ENCODE measurements at regions of chr2 and their contacts with region 1.

Region 1: GRCh38 chr2:60881047-60881932 is at the start of gene REL:
- DNase-seq: peak; percentile 90
- H3K4me3 Mint-ChIP-seq: peak within 1 kb of the TSS; percentile 95
- H3K27ac Mint-ChIP-seq: peak within 1 kb of the TSS; percentile 96
- H3K4me1 Mint-ChIP-seq: peaks cover 27% of the 10 kb centered on the region
- H3K27me3 Mint-ChIP-seq: peaks cover 3% of the 10 kb centered on the region
- total RNA-seq, gene REL: 22.9 to 24.0 TPM

Region 2: GRCh38 chr2:60756191-60757041 is 124.9 kb before region 1 on chr2 and contains the start of gene PAPOLG:
- CTCF ChIA-PET with region 1: no interaction called
- POLR2A ChIA-PET with region 1: interaction called, 17 read pairs
- DNase-seq: peak; percentile 97
- H3K4me3 Mint-ChIP-seq: peak within 1 kb of the TSS; percentile 100
- H3K27ac Mint-ChIP-seq: peak within 1 kb of the TSS; percentile 99
- H3K4me1 Mint-ChIP-seq: peaks cover 30% of the 10 kb centered on the region
- H3K27me3 Mint-ChIP-seq: no peaks in the 10 kb centered on the region
- total RNA-seq, gene PAPOLG: 21.1 to 23.6 TPM

Region 3: DNA sequence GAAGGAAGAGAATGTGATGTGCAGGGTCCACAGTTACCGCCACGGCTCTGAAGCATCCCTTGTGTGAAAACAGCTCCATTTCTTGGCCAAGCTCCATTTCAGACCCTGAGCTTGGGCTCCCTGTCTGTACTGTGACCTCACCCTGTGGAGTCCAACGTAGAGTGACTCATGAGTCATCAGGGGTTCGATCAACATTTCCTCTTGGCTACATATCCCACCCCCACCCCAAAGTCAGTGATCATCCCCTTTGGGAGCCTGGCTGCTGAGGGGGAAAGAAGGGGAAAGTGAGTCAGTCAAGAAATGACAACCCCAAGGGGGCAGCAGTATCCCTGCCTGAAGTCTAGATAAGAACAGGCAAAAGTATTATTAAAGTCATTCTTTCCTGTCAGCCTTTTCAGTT is 63.0 kb before region 1 on chr2:
- CTCF ChIA-PET with region 1: interaction called, 3 read pairs
- POLR2A ChIA-PET with region 1: interaction called, 16 read pairs
- DNase-seq: peak; percentile 24
- H3K4me3 Mint-ChIP-seq: no peak overlapping the region
- H3K27ac Mint-ChIP-seq: peak overlapping the region; percentile 26
- H3K4me1 Mint-ChIP-seq: peaks cover 37% of the 10 kb centered on the region
- H3K27me3 Mint-ChIP-seq: peaks cover 7% of the 10 kb centered on the region

Region 4: GRCh38 chr2:60867848-60868247 is 13.4 kb before region 1 on chr2:
- CTCF ChIA-PET with region 1: interaction called, 6 read pairs
- POLR2A ChIA-PET with region 1: interaction called, 39 read pairs
- DNase-seq: peak; percentile 52
- H3K4me3 Mint-ChIP-seq: no peak overlapping the region
- H3K27ac Mint-ChIP-seq: peak overlapping the region; percentile 68
- H3K4me1 Mint-ChIP-seq: peaks cover 27% of the 10 kb centered on the region
- H3K27me3 Mint-ChIP-seq: no peaks in the 10 kb centered on the region

Region 5: DNA sequence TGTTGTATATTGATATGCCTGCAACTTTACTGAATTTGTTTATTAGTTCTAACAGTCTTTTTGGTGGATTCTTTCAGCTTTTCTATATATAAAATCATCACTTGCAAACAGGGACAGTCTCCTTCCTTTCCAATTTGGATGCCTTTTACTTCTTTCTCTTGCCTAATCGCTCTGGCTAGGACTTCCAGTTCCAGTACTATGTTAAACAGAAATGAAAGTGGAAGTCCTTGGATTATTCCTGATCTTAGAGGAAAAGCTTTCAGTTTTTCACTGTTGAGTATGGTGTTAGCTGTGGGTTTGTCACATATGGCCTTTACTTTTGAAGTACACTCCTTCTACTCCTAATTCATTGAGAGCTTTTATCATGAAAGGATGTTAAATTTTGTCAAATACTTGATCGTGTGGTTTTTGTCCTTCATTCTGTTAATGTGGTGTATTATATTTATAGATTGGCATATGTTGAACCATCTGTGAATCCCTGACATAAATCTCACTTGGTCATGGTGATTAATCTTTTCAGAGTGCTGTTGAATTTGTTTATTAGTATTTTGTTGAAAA is 53.0 kb after region 1 on chr2:
- CTCF ChIA-PET with region 1: no interaction called
- POLR2A ChIA-PET with region 1: no interaction called
- DNase-seq: no peak
- H3K4me3 Mint-ChIP-seq: no peak overlapping the region
- H3K27ac Mint-ChIP-seq: no peak overlapping the region
- H3K4me1 Mint-ChIP-seq: peaks cover 6% of the 10 kb centered on the region
- H3K27me3 Mint-ChIP-seq: no peaks in the 10 kb centered on the region

Region 6: GRCh38 chr2:60966507-60967405 is 85.5 kb after region 1 on chr2:
- CTCF ChIA-PET with region 1: no interaction called
- POLR2A ChIA-PET with region 1: interaction called, 25 read pairs
- DNase-seq: no peak
- H3K4me3 Mint-ChIP-seq: no peak overlapping the region
- H3K27ac Mint-ChIP-seq: peak overlapping the region; percentile 3
- H3K4me1 Mint-ChIP-seq: peaks cover 33% of the 10 kb centered on the region
- H3K27me3 Mint-ChIP-seq: no peaks in the 10 kb centered on the region

Region 7: GRCh38 chr2:61016808-61017555 is 135.7 kb after region 1 on chr2:
- CTCF ChIA-PET with region 1: no interaction called
- POLR2A ChIA-PET with region 1: interaction called, 11 read pairs
- DNase-seq: peak; percentile 74
- H3K4me3 Mint-ChIP-seq: peak overlapping the region; percentile 96
- H3K27ac Mint-ChIP-seq: peak overlapping the region; percentile 89
- H3K4me1 Mint-ChIP-seq: peaks cover 49% of the 10 kb centered on the region
- H3K27me3 Mint-ChIP-seq: no peaks in the 10 kb centered on the region

Measured in activated CD4-positive, alpha-beta memory T cell treated with anti-CD3 and anti-CD28 coated beads, Interleukin-2, amount 10 ng/mL, durations not matched to agents 7 days and 5 days (primary cell).